Activated naive CD4-positive, alpha-beta T cell treated with anti-CD3 and anti-CD28 coated beads for 36 hours (primary cell): ENCODE measurements at regions of chr6 and their contacts with region 1.

Region 1: GRCh38 chr6:142566628-142567396 is 265.0 kb downstream of the ADGRG6 start:
- DNase-seq: peak; percentile 81
- H3K4me3 Mint-ChIP-seq: no peak overlapping the region
- H3K27ac Mint-ChIP-seq: no peak overlapping the region
- H3K4me1 Mint-ChIP-seq: peaks cover 80% of the 10 kb centered on the region
- H3K27me3 Mint-ChIP-seq: no peaks in the 10 kb centered on the region

Region 2: GRCh38 chr6:142146828-142147662 is 419.8 kb before region 1 on chr6 and contains the starts of genes NMBR and VTA1:
- CTCF ChIA-PET with region 1: no interaction called
- intact Hi-C with region 1: loop called (anchors 2 kb)
- DNase-seq: peak; percentile 98
- H3K4me3 Mint-ChIP-seq: peak within 1 kb of the TSS; percentile 93
- H3K27ac Mint-ChIP-seq: peak within 1 kb of the TSS; percentile 91
- H3K4me1 Mint-ChIP-seq: peaks cover 53% of the 10 kb centered on the region
- H3K27me3 Mint-ChIP-seq: no peaks in the 10 kb centered on the region
- total RNA-seq, gene NMBR: not detected
- total RNA-seq, gene VTA1: 54.7 to 57.3 TPM

Region 3: DNA sequence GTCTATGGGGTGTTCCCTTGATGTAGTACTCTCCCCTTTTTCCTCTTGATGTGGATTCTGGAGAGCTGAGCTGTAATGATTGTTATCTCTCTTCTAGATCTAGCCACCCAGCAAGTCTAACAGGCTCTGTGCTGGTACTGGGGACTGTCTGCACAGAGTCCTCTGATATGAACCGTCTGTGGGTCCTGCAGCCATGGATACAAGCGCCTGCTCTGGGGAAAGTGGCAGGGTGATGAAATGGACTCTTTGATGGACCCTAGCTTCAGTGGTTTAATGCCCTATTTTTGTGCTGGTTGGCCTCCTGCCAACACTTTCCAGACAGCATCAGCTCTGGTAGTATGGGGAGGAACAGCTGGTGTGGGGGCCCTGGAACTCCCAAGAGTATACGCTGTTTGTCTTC is 48.7 kb before region 1 on chr6:
- CTCF ChIA-PET with region 1: no interaction called
- intact Hi-C with region 1: no loop called
- DNase-seq: no peak
- H3K4me3 Mint-ChIP-seq: no peak overlapping the region
- H3K27ac Mint-ChIP-seq: no peak overlapping the region
- H3K4me1 Mint-ChIP-seq: peaks cover 3% of the 10 kb centered on the region
- H3K27me3 Mint-ChIP-seq: no peaks in the 10 kb centered on the region

Region 4: GRCh38 chr6:142544199-142544838 is 22.5 kb before region 1 on chr6:
- CTCF ChIA-PET with region 1: interaction called, 9 read pairs
- intact Hi-C with region 1: loop called (anchors 1 kb)
- DNase-seq: peak; percentile 29
- H3K4me3 Mint-ChIP-seq: no peak overlapping the region
- H3K27ac Mint-ChIP-seq: peak overlapping the region; percentile 68
- H3K4me1 Mint-ChIP-seq: peaks cover 46% of the 10 kb centered on the region
- H3K27me3 Mint-ChIP-seq: no peaks in the 10 kb centered on the region

Region 5: GRCh38 chr6:142659661-142660060 is 92.8 kb after region 1 on chr6:
- CTCF ChIA-PET with region 1: no interaction called
- intact Hi-C with region 1: no loop called
- DNase-seq: no peak
- H3K4me3 Mint-ChIP-seq: no peak overlapping the region
- H3K27ac Mint-ChIP-seq: no peak overlapping the region
- H3K4me1 Mint-ChIP-seq: no peaks in the 10 kb centered on the region
- H3K27me3 Mint-ChIP-seq: no peaks in the 10 kb centered on the region

Region 6: DNA sequence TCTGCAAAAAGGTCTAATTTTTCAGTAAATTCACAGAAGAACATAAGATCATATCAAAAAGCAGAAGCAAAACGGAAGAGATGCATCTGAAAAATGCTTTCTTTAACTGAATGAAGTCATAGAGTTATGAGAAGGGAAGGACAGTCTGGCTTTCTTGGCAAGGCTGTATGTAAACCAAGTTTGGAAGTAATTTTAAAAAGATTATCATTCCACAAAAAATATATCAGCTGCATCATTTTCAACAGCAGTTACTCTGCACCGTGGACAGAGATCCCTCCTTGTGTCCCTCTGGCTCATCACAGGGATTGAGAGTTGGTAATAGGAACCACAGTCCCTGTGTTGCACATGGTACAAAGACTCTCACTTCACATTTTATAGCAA is 119.7 kb after region 1 on chr6:
- CTCF ChIA-PET with region 1: interaction called, 3 read pairs
- intact Hi-C with region 1: loop called (anchors 1 kb)
- DNase-seq: no peak
- H3K4me3 Mint-ChIP-seq: no peak overlapping the region
- H3K27ac Mint-ChIP-seq: no peak overlapping the region
- H3K4me1 Mint-ChIP-seq: peaks cover 32% of the 10 kb centered on the region
- H3K27me3 Mint-ChIP-seq: no peaks in the 10 kb centered on the region

Region 7: GRCh38 chr6:142833054-142833453 is 266.2 kb after region 1 on chr6:
- CTCF ChIA-PET with region 1: no interaction called
- intact Hi-C with region 1: loop called (anchors 1 kb)
- DNase-seq: peak; percentile 75
- H3K4me3 Mint-ChIP-seq: no peak overlapping the region
- H3K27ac Mint-ChIP-seq: peak overlapping the region; percentile 81
- H3K4me1 Mint-ChIP-seq: peaks cover 84% of the 10 kb centered on the region
- H3K27me3 Mint-ChIP-seq: no peaks in the 10 kb centered on the region

Region 8: GRCh38 chr6:142913511-142914047 is 346.8 kb after region 1 on chr6:
- CTCF ChIA-PET with region 1: no interaction called
- intact Hi-C with region 1: loop called (anchors 1 kb)
- DNase-seq: peak; percentile 82
- H3K4me3 Mint-ChIP-seq: peak overlapping the region; percentile 64
- H3K27ac Mint-ChIP-seq: peak overlapping the region; percentile 96
- H3K4me1 Mint-ChIP-seq: peaks cover 84% of the 10 kb centered on the region
- H3K27me3 Mint-ChIP-seq: no peaks in the 10 kb centered on the region

Region 9: DNA sequence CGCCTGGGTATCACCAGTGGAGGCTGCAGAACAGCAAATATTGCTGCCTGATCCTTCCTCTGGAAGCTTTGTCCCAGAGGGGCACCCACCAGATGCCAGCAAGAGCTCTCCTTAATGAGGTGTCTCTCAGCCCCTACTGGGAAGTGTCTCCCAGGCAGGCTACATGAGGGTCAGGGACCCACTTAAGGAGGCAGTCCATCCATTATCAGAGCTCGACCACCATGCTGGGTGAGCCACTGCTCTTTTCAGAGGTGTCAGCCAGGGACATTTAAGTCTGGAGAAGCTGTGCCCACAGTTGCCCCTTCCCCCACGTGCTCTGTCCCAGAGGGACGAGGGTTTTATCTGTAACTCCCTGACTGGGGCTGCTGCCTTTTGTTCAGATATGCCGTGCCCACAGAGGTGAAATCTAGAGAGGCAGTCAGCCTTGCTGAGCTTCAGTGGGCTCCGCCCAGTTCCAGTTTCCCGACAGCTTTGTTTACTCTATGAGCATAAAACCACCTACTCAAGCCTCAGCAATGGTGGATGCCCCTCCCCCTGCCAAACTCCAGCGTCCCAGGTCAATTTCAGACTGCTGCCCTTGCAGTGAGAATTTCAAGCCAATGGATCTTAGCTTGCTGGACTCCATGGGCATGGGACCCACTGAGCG is 468.0 kb after region 1 on chr6:
- CTCF ChIA-PET with region 1: no interaction called
- intact Hi-C with region 1: no loop called
- DNase-seq: no peak
- H3K4me3 Mint-ChIP-seq: no peak overlapping the region
- H3K27ac Mint-ChIP-seq: no peak overlapping the region
- H3K4me1 Mint-ChIP-seq: peaks cover 8% of the 10 kb centered on the region
- H3K27me3 Mint-ChIP-seq: no peaks in the 10 kb centered on the region

Region 10: GRCh38 chr6:143427109-143427817 is 860.5 kb after region 1 on chr6:
- CTCF ChIA-PET with region 1: interaction called, 10 read pairs
- intact Hi-C with region 1: loop called (anchors 2 kb)
- DNase-seq: peak; percentile 76
- H3K4me3 Mint-ChIP-seq: no peak overlapping the region
- H3K27ac Mint-ChIP-seq: no peak overlapping the region
- H3K4me1 Mint-ChIP-seq: peaks cover 14% of the 10 kb centered on the region
- H3K27me3 Mint-ChIP-seq: no peaks in the 10 kb centered on the region